ENCODE measurements at regions of chr3 and their contacts with region 1.

Region 1: DNA sequence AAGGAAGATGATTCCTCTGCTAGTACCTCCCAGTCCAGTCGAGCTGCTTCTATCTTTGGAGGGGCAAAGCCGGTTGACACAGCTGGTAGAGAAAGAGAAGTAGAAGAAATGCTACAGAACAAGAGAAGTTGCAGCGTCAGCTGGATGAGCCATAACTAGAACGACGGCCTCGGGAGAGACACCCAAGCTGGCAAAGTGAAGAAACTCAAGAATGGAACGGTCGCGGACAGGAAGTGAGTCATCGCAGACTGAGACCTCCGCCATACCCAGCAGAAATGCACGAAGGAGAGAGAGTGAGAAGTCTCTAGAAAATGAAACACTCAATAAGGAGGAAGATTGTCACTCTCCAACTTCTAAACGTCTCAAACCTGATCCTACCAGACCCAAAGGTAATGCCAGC is 19.0 kb upstream of the PARP14 start:
- DNase-seq: no peak
- ATAC-seq: peak; percentile 40
- H3K4me3 Mint-ChIP-seq: peak overlapping the region; percentile 52
- H3K27ac Mint-ChIP-seq: peak overlapping the region; percentile 50
- H3K4me1 Mint-ChIP-seq: peaks cover 12% of the 10 kb centered on the region
- H3K27me3 Mint-ChIP-seq: no peaks in the 10 kb centered on the region
- CTCF ChIP-seq: no peak

Region 2: DNA sequence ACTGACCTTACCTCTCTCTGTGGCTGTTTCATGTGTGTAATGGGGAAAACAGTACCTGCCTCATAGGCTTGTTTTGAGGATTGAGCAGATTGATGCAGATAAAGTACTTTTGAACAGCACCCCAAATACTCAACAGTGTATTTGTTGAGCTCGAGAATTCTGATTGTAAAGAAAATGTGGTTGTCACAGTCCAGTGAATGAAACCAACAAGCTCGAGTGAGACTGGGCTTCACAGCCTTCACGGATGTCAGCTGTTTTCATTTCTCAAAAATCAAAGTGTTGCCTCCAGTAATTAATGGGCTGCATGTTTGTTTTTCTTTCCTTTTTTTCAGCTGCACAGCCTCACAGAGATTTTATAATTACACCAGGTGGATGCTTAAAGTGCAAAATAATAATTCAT is 40.5 kb before region 1 on chr3:
- CTCF ChIA-PET with region 1: no interaction called
- POLR2A ChIA-PET with region 1: no interaction called
- intact Hi-C with region 1: loop called (anchors 2 kb)
- DNase-seq: no peak
- ATAC-seq: peak; percentile 38
- H3K4me3 Mint-ChIP-seq: peak overlapping the region; percentile 56
- H3K27ac Mint-ChIP-seq: peak overlapping the region; percentile 85
- H3K4me1 Mint-ChIP-seq: peaks cover 73% of the 10 kb centered on the region
- H3K27me3 Mint-ChIP-seq: no peaks in the 10 kb centered on the region
- CTCF ChIP-seq: no peak

Region 3: DNA sequence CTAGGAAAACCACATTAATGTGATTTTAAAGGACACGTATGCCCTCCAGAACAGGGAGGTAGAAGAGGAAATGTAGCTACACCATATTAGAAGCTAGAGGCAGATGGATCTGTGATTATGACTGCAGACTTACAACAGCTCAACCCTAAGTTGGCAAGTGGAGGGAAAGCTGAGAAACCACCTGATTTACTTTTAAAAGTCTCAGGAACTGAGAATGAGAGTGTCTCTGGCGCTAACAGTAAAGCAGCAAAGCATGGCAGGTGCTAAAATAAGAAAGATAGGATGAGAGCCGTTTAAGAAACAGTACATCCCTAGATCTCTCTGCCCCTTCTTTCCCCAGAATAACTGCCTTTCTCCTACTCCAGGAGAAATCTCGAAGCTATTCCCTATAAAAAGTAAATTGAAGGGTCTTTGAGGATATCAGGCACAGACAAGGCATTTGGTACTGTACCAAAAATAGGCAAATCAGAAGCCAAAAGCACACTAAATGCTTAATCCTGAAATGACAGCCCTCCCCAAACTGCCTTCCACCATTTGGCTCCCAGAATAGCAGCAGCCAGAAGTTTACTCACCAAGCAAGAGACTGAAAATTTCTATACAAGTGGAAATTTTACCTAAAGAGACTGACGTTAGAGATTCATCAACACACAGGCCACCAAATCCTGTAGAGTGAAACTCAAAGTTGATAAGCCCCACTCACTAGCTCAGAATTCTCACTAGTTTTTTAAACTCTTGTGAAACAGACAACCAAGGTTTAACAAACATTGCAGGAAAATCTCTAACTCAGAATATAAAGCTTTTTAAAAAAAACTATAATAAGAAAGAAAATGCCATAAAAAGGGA is 15.3 kb before region 1 on chr3:
- CTCF ChIA-PET with region 1: no interaction called
- POLR2A ChIA-PET with region 1: interaction called, 3 read pairs
- intact Hi-C with region 1: loop called (anchors 2 kb)
- DNase-seq: no peak
- ATAC-seq: peak; percentile 45
- H3K4me3 Mint-ChIP-seq: no peak overlapping the region
- H3K27ac Mint-ChIP-seq: peak overlapping the region; percentile 18
- H3K4me1 Mint-ChIP-seq: peaks cover 27% of the 10 kb centered on the region
- H3K27me3 Mint-ChIP-seq: no peaks in the 10 kb centered on the region
- CTCF ChIP-seq: no peak

Region 4: GRCh38 chr3:122786066-122786465 is 124.4 kb after region 1 on chr3:
- CTCF ChIA-PET with region 1: no interaction called
- POLR2A ChIA-PET with region 1: no interaction called
- intact Hi-C with region 1: no loop called
- DNase-seq: no peak
- ATAC-seq: no peak
- H3K4me3 Mint-ChIP-seq: no peak overlapping the region
- H3K27ac Mint-ChIP-seq: no peak overlapping the region
- H3K4me1 Mint-ChIP-seq: peaks cover 11% of the 10 kb centered on the region
- H3K27me3 Mint-ChIP-seq: no peaks in the 10 kb centered on the region
- CTCF ChIP-seq: no peak